ENCODE measurements at regions of chr1 and their contacts with region 1.

Region 1: DNA sequence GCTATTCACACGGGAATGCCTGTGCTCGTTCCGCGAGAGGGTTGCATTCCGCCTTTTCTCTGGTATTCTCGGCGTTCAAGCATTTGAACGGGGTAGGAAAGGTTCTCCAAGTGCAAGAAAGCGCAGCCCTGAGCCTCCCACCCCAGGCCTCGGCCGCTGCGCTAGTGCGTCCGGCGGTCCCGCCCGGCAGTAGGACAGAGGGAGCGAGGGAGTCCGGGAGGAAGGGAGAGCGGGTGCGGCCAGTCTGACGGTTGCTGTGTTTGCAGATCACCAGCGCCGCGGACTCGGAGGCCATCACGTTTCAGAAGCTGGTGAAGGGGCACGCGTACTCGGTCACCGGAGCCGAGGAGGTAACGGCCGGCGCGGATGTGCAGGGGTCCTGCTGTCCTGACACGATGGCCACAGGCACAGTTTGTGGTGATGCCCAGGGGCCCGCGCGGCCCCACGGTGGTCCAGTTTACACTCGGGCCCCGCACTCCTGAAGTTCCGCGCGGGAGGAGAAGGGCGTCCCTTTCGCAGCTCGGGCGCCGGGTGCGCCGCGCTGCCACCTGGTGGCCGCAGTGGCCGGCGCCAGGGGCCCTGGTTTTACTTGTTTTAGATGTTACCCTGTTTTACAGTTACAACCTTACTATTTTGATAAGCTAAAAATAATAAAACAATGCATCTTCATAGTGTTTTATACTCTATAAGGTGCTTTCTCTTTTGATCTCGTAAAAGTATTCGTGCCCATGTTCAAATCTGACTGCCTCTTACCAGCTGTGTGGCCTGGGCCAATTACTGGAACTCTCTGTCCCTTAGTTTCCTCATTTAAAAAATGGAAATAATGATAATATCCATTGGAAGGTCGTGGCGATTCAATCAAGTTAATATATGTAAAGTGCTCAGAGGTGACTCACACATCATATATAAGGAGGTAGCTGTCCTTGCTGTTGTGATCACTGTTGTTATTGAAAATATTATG is 36.7 kb downstream of the CAPN2 start:
- DNase-seq: peak; percentile 86
- ATAC-seq: peak; percentile 94

Region 2: DNA sequence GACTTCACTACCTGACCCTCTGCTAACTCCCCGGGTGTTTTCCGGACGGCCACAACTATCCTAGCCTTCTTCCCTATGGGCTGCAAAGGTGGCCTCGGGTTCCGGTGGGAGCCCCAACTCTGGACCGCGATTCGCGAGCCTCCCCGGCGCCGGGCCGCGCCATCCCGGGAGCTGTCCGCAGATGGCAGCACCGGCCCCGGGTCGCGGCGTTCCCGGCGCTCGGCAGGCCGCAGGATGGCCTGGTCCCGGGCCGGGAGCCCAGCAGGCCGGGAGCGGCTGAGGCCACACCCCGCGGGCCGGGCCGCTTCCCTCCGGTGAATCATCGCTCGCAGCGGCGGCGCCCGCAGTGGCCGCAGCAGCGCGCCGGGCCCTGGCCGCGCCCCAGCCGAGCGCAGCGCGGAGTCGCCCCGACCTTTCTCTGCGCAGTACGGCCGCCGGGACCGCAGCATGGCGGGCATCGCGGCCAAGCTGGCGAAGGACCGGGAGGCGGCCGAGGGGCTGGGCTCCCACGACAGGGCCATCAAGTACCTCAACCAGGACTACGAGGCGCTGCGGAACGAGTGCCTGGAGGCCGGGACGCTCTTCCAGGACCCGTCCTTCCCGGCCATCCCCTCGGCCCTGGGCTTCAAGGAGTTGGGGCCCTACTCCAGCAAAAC is 36.7 kb before region 1 on chr1 and contains the start of gene CAPN2:
- intact Hi-C with region 1: loop called (anchors 5 kb)
- DNase-seq: peak; percentile 91
- ATAC-seq: peak; percentile 96
- total RNA-seq, gene CAPN2: 72.6 TPM

Measured in Right ventricle myocardium superior (tissue), 1 donor.